BJ (cell line): ENCODE measurements at regions of chr11 and their contacts with region 1.

Region 1: GRCh38 chr11:33027846-33028536 is 11.4 kb upstream of the TCP11L1 start:
- DNase-seq: no peak
- H3K4me3 ChIP-seq: no peak overlapping the region
- H3K27me3 ChIP-seq: no peaks in the 10 kb centered on the region
- CTCF ChIP-seq: no peak

Region 2: DNA sequence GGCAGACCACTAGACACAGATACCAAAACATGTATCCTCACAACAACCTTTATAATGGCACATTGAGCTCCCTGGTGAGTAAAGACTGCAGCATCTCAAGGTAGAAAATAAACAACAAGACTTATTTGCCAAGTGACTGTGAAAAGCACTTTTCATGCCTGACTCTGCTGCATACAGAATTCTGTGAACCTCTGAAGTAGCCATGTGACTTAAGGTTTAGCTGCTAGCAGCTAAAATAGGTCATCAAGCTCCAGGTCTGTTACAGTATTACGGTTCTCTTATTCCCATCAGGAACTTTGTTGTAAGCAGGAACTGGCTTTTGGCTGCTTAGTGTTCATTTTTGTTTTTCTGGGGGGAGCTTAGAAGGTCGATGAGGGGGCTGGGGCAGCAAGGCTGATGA is 1356.3 kb before region 1 on chr11:
- CTCF ChIA-PET with region 1: no interaction called
- POLR2A ChIA-PET with region 1: interaction called, 14 read pairs
- DNase-seq: no peak
- H3K4me3 ChIP-seq: no peak overlapping the region
- H3K27me3 ChIP-seq: no peaks in the 10 kb centered on the region
- CTCF ChIP-seq: no peak

Region 3: DNA sequence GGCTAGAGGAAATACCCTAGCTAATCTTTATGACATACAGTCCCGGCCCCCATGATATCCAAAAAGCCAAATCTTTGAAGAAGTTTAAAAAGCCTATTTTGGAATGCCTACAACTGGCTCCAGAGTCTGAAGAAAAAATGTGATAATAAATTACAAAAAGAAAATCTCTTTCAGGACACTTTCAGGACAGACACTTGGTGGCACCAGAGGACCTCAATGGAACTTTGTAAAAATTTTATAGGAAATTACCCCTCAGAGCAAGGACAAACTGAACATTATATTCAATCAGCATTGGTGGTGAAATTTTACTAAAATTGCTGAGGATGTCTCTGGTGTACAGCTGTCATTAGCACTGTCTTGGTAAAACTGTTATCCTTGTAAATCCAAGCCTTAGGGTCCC is 314.5 kb before region 1 on chr11:
- CTCF ChIA-PET with region 1: no interaction called
- POLR2A ChIA-PET with region 1: no interaction called
- DNase-seq: no peak
- H3K4me3 ChIP-seq: no peak overlapping the region
- H3K27me3 ChIP-seq: peaks cover 6% of the 10 kb centered on the region
- CTCF ChIP-seq: 0 out of 2 replicates have a peak, but pooled peaks have one; percentile 18

Region 4: DNA sequence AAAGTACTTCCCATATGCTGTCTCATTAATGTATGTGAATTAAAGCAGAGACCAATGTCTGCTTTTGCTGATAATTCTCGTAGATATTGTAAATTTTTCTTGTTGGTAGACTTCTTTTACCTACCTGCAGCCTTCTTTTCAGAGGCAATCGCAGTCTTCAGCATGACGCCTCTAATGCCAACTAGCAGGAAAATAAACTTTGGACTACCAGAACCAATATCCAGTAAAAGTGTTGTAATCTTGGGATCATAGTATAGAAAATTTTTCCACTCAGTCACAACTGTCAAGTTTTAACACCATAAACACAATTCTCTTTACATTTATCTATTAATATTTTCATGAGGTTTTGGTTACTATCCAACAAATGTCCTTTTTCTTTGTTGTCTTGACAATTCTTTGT is 10.0 kb before region 1 on chr11:
- CTCF ChIA-PET with region 1: interaction called, 9 read pairs
- POLR2A ChIA-PET with region 1: interaction called, 13 read pairs
- DNase-seq: no peak
- H3K4me3 ChIP-seq: no peak overlapping the region
- H3K27me3 ChIP-seq: no peaks in the 10 kb centered on the region
- CTCF ChIP-seq: no peak

Region 5: GRCh38 chr11:33089776-33090175 is 61.8 kb after region 1 on chr11:
- CTCF ChIA-PET with region 1: no interaction called
- POLR2A ChIA-PET with region 1: no interaction called
- DNase-seq: no peak
- H3K4me3 ChIP-seq: no peak overlapping the region
- H3K27me3 ChIP-seq: no peaks in the 10 kb centered on the region
- CTCF ChIP-seq: no peak